Activated CD4-positive, alpha-beta T cell treated with anti-CD3 and anti-CD28 coated beads, Interleukin-2, amount 10 ng/mL, durations not matched to agents 24 days and 14 days (primary cell): ENCODE measurements at regions of chr7 and their contacts with region 1.

Region 1: GRCh38 chr7:159070431-159071148 is 74.1 kb downstream of the VIPR2 start:
- DNase-seq: peak; percentile 81
- H3K4me3 Mint-ChIP-seq: peak overlapping the region; percentile 34
- H3K27ac Mint-ChIP-seq: peak overlapping the region; percentile 80
- H3K4me1 Mint-ChIP-seq: peaks cover 26% of the 10 kb centered on the region
- H3K27me3 Mint-ChIP-seq: no peaks in the 10 kb centered on the region

Region 2: GRCh38 chr7:158517072-158517970 is 553.3 kb before region 1 on chr7:
- intact Hi-C with region 1: no loop called
- DNase-seq: no peak
- H3K4me3 Mint-ChIP-seq: no peak overlapping the region
- H3K27ac Mint-ChIP-seq: no peak overlapping the region
- H3K4me1 Mint-ChIP-seq: no peaks in the 10 kb centered on the region
- H3K27me3 Mint-ChIP-seq: no peaks in the 10 kb centered on the region

Region 3: GRCh38 chr7:159007364-159007995 is 63.1 kb before region 1 on chr7:
- intact Hi-C with region 1: loop called (anchors 2 kb)
- DNase-seq: no peak
- H3K4me3 Mint-ChIP-seq: no peak overlapping the region
- H3K27ac Mint-ChIP-seq: peak overlapping the region; percentile 17
- H3K4me1 Mint-ChIP-seq: peaks cover 19% of the 10 kb centered on the region
- H3K27me3 Mint-ChIP-seq: no peaks in the 10 kb centered on the region

Region 4: GRCh38 chr7:159105845-159106614 is 35.4 kb after region 1 on chr7:
- intact Hi-C with region 1: no loop called
- DNase-seq: no peak
- H3K4me3 Mint-ChIP-seq: no peak overlapping the region
- H3K27ac Mint-ChIP-seq: no peak overlapping the region
- H3K4me1 Mint-ChIP-seq: peaks cover 2% of the 10 kb centered on the region
- H3K27me3 Mint-ChIP-seq: peaks cover 4% of the 10 kb centered on the region